ENCODE measurements at regions of chr5 and their contacts with region 1.

Region 1: DNA sequence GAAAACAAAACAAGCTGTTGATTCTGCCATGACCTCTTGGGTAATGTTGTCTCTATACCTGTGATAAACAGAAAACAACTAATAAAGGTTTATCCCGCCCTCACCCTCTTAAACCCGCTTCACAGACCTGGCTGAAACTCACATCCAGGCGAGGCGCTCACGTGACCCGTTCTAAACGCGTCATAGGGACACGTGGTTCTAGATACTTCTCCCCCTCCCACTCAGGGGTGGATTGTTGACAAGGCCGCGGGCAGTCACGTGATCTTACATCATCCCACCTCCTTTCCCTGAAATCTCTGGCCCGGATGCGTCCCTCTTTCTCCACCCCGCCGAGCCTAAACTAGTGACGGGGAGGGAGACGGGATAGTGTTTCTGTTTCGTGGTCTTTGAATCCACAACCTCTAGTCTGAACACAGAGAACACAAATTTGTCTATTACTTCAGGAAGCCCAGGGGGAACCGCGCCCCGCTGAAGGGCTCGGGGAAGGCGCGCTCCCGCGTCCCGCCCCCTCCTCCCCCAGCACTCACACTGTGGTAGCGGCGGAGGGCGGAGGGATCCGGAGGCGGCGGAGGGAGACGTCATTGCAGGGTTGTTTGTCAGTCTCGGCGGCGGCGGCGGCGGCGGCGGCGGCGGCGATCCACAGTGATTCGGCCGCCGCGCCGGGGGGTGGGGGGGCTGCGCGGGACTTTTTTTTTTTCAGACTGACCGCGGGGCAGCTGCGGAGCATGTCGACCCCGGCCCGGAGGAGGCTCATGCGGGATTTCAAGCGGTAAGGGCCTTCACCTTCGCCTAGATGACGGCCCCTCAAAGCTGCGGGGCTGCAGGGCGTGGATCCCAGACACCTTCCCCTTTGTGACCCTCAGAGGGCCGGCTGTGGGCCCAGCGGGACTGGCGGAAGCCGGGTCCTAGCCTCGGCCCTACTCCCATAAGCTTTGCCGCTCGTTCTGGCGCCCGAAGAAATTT is at the start of gene UBE2B:
- DNase-seq: peak; percentile 99
- H3K4me3 Mint-ChIP-seq: peak within 1 kb of the TSS; percentile 94
- H3K27ac Mint-ChIP-seq: peak within 1 kb of the TSS; percentile 100
- H3K4me1 Mint-ChIP-seq: peaks cover 29% of the 10 kb centered on the region
- H3K27me3 Mint-ChIP-seq: peaks cover 9% of the 10 kb centered on the region
- CTCF ChIP-seq: no peak
- total RNA-seq, gene UBE2B: 114 and 132 TPM in 2 replicates

Region 2: DNA sequence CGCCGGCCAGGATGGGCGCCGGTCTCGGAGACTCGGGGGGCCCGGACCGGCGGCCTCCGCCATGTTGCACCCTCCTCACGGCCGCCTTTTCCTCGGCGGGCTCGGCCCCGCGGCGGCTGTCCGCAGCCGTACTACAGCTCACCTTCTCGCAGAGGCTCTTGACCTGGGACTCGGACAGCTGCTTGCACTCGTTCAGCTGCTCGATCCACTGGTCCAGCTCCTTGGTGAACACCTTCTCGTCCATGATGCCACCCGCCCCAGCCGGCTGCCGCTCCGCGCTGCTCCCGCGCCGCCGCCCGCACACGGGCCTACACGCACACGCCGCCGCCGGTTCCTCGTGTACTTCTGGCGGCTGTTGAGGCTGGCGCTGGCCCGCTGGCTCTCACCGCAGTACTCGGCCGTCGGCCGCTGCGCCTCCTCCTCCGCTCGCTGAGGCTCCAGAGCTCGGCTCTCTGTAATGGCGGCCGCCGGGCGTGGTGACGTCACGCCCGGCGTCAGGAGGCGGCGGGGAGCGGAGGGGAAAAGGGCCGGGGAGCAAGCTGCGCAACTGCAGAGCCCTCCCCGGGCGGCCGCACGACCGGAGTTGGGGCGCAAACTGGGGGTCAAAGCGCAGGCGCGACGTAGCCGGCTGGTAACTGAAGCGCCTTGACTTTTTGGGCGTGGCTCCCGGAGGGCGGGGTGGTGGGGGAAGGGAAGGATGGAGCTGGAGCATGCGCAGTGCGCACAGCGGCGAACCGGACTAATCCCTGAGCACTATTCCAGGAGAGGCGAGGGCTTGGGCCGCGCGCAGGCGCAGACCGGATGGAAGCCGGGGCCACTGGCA is 145.3 kb before region 1 on chr5 and contains the start of gene PPP2CA:
- CTCF ChIA-PET with region 1: no interaction called
- intact Hi-C with region 1: loop called (anchors 5 kb)
- DNase-seq: peak; percentile 99
- H3K4me3 Mint-ChIP-seq: peak within 1 kb of the TSS; percentile 93
- H3K27ac Mint-ChIP-seq: peak within 1 kb of the TSS; percentile 94
- H3K4me1 Mint-ChIP-seq: peaks cover 37% of the 10 kb centered on the region
- H3K27me3 Mint-ChIP-seq: no peaks in the 10 kb centered on the region
- CTCF ChIP-seq: peak; percentile 21
- total RNA-seq, gene PPP2CA: 242 and 260 TPM in 2 replicates

Region 3: GRCh38 chr5:134304311-134304710 is 66.8 kb before region 1 on chr5:
- CTCF ChIA-PET with region 1: no interaction called
- intact Hi-C with region 1: loop called (anchors 5 kb)
- DNase-seq: no peak
- H3K4me3 Mint-ChIP-seq: no peak overlapping the region
- H3K27ac Mint-ChIP-seq: no peak overlapping the region
- H3K4me1 Mint-ChIP-seq: peaks cover 6% of the 10 kb centered on the region
- H3K27me3 Mint-ChIP-seq: no peaks in the 10 kb centered on the region
- CTCF ChIP-seq: no peak

Region 4: DNA sequence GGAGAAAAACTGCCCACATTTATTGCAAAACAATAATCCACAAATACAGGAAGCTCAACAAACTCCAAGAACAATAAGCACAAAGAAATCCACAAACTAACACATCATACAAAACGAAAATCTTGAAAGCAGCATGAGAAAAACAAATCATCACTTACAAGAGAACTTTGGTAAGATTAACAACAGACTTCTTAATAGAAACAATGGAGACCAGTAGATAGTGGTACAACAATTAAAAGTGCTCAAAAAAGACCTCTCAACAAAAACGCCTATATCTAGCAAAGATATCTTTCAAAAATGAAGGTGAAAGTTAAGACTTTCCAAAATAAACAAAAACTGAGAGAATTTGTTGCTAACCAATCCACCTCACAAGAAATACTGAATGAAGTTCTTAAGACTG is 42.5 kb before region 1 on chr5:
- CTCF ChIA-PET with region 1: no interaction called
- intact Hi-C with region 1: loop called (anchors 1 kb)
- DNase-seq: no peak
- H3K4me3 Mint-ChIP-seq: no peak overlapping the region
- H3K27ac Mint-ChIP-seq: no peak overlapping the region
- H3K4me1 Mint-ChIP-seq: no peaks in the 10 kb centered on the region
- H3K27me3 Mint-ChIP-seq: no peaks in the 10 kb centered on the region
- CTCF ChIP-seq: no peak

Region 5: DNA sequence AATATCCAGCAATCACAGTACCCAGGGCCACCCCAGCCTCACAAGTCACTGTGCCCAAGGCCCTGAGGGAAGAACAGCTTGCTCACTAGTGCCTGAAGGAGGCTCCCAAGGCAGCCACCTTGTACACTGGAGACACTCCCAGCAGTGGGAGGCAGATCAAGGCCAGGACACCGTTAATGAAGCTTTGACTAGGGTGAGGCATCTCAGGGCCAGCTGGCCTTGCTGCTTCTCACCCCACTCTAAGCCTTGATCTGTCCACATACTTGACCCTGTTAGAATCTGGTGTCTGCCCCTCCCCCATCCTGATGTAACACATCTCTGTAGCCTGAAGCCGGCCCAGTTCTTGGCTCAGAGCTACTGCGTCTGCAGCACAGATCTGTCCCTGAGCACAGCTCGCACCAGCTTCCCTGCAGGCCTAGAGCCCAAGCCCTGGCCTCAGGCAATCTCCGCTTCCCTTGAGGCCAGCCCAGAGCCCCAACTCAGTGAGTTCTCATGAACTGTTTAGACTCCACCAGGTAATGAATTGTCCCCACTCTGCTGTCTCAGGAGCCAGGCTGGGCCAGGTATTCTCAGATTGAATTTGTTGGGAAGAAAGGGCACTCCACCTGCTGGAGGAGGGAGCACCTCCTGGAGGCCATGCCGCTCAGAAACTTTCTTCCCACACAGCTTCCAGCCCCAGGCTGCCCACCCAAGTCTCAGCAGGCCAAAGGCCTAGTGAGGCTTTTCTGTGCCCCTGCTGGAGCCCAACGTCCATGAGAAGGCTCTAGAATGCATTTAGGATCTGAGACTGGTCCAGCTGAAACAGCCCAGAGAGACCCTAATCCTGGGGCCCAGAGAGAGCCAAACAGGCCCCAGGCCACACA is 140.9 kb after region 1 on chr5:
- CTCF ChIA-PET with region 1: no interaction called
- intact Hi-C with region 1: loop called (anchors 5 kb)
- DNase-seq: peak; percentile 64
- H3K4me3 Mint-ChIP-seq: peak overlapping the region; percentile 64
- H3K27ac Mint-ChIP-seq: peak overlapping the region; percentile 87
- H3K4me1 Mint-ChIP-seq: peaks cover 60% of the 10 kb centered on the region
- H3K27me3 Mint-ChIP-seq: no peaks in the 10 kb centered on the region
- CTCF ChIP-seq: peak; percentile 51

Region 6: GRCh38 chr5:134577796-134578363 is 206.7 kb after region 1 on chr5:
- CTCF ChIA-PET with region 1: interaction called, 3 read pairs
- intact Hi-C with region 1: loop called (anchors 5 kb)
- DNase-seq: peak; percentile 88
- H3K4me3 Mint-ChIP-seq: no peak overlapping the region
- H3K27ac Mint-ChIP-seq: peak overlapping the region; percentile 77
- H3K4me1 Mint-ChIP-seq: peaks cover 19% of the 10 kb centered on the region
- H3K27me3 Mint-ChIP-seq: no peaks in the 10 kb centered on the region
- CTCF ChIP-seq: peak; percentile 90

Region 7: DNA sequence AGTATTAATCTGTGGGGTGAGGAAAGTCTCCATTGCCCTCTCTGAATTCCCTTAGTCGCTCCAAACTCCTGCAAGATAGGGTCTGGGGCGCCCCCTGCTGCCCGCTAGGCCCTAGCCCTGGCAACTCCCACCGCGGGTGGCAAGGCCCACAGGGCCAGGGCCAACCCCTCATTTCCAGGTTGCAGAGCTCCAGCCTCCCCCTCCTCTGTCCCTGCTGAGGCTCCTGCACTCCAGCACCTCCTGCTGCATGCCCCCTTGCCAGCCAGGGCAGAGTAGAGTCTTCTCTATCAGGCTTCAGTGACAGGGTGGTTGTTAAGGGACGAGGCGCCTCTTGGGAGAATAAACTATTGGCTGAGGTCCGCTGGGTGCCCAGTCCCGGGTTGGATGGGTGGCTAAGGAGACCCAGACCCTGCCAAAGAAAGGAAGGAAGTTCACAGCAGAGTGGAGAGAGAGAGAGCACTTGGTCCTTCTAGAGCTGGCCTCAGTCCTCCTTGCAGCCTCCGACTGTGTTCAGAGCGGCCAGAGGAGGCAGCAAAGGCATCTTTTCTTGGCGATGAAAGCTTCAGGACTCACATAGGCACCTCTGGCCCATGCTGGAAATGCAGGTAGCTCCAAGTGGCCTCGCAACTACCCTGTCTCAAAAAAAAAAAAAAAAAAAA is 215.8 kb after region 1 on chr5:
- CTCF ChIA-PET with region 1: interaction called, 10 read pairs
- intact Hi-C with region 1: no loop called
- DNase-seq: peak; percentile 97
- H3K4me3 Mint-ChIP-seq: peak overlapping the region; percentile 26
- H3K27ac Mint-ChIP-seq: no peak overlapping the region
- H3K4me1 Mint-ChIP-seq: peaks cover 29% of the 10 kb centered on the region
- H3K27me3 Mint-ChIP-seq: no peaks in the 10 kb centered on the region
- CTCF ChIP-seq: peak; percentile 90

Region 8: DNA sequence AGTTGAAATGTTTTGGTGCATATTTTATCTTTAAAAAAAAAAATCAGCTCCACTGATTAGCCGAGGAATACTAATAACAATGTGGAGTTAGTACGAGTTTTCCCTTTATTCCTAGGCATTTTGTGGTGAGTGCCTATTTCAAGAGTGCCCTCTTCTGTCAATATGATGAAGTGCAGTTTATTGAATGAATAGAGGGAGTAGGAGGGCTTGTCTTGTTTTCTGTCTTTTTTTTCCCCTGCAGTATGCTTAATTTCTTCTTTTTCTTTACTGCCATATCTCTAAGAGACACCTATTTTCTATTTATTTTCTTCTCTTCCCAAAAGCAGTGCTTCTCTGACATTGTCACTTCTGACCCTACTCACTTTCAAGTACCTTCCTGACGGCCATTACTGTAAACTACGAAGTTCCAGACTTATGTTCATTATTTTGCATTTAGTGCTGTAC is 832.5 kb after region 1 on chr5:
- CTCF ChIA-PET with region 1: no interaction called
- intact Hi-C with region 1: no loop called
- DNase-seq: no peak
- H3K4me3 Mint-ChIP-seq: no peak overlapping the region
- H3K27ac Mint-ChIP-seq: no peak overlapping the region
- H3K4me1 Mint-ChIP-seq: peaks cover 14% of the 10 kb centered on the region
- H3K27me3 Mint-ChIP-seq: peaks cover 35% of the 10 kb centered on the region
- CTCF ChIP-seq: peak; percentile 52

Measured in Calu3 (cell line).